ENCODE measurements at regions of chr2 and their contacts with region 1.

Region 1: DNA sequence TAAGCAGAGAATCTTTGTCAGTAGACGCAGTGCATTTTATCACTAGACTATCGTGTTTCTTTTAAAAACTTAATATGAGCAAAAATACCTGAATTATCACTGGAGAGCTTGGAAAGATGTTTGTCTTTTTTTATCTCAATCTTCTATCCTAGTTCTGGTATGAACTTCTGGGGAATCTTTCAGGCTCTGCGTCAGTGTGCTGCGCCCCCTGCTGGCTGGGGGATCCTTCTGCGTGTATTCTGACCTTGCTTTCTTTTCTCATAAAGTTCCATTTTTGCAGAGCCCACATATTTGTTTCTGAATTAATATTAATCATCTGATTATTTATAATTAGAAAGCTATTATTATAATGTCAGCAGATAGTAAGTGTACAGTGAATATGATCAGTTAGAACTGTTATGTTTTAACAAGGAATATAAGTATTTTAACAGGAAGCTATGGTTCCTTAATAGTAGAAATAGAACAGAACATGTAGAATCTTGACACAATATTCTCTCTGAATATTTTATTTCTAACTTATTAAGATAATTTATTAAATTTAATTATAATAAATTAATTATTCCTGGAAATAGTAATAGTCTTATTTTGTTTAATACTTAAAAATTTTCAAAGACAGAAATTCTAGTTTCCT is 945.0 kb upstream of the CRIM1 start:
- DNase-seq: peak; percentile 62
- H3K4me3 Mint-ChIP-seq: no peak overlapping the region
- H3K27ac Mint-ChIP-seq: no peak overlapping the region
- H3K4me1 Mint-ChIP-seq: no peaks in the 10 kb centered on the region
- H3K27me3 Mint-ChIP-seq: peaks cover 51% of the 10 kb centered on the region
- CTCF ChIP-seq: peak; percentile 86

Region 2: GRCh38 chr2:34012715-34013302 is 1397.7 kb before region 1 on chr2:
- CTCF ChIA-PET with region 1: interaction called, 4 read pairs
- POLR2A ChIA-PET with region 1: no interaction called
- intact Hi-C with region 1: loop called (anchors 1 kb)
- DNase-seq: peak; percentile 66
- H3K4me3 Mint-ChIP-seq: no peak overlapping the region
- H3K27ac Mint-ChIP-seq: peak overlapping the region; percentile 3
- H3K4me1 Mint-ChIP-seq: peaks cover 6% of the 10 kb centered on the region
- H3K27me3 Mint-ChIP-seq: no peaks in the 10 kb centered on the region
- CTCF ChIP-seq: peak; percentile 80

Region 3: DNA sequence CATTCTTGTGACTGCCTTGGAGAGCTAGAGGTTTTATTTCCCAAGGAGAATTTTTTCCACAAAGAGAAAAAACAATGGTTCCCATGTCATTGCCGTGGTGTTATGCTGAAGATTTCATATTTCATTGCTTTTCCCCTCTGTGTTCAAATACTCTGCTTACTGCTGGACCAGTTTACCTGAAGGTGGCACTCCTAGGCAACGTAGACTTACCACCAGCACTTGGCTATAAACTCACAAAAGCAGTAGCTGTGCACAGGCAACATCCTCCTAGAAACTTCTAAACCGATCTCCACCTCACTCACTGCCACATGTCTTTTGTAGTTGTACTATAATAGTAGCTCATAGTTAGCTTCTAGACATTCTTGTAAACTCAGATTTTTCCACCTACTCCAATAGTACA is 374.7 kb before region 1 on chr2:
- CTCF ChIA-PET with region 1: interaction called, 12 read pairs
- POLR2A ChIA-PET with region 1: no interaction called
- intact Hi-C with region 1: no loop called
- DNase-seq: peak; percentile 34
- H3K4me3 Mint-ChIP-seq: no peak overlapping the region
- H3K27ac Mint-ChIP-seq: no peak overlapping the region
- H3K4me1 Mint-ChIP-seq: no peaks in the 10 kb centered on the region
- H3K27me3 Mint-ChIP-seq: peaks cover 46% of the 10 kb centered on the region
- CTCF ChIP-seq: no peak

Region 4: DNA sequence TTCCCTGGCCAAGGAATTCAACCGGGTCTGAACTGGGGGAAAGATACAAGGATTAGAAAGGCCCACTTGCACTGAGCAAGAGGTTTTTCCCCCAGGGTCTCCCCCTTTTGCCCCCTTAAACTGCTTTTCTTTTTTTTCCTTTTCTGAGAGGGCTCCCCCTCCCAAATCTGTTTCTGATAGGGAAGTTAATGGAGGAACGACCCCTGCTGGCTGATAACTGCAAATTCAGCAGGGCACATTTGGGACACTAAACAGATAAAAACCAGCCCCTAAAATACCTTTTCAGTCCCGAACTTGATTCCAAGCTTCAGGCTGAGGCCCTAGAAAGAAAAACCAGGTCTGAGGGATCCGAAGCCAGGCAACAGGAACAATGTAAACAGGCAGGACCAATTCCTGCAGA is 67.4 kb before region 1 on chr2:
- CTCF ChIA-PET with region 1: no interaction called
- POLR2A ChIA-PET with region 1: no interaction called
- intact Hi-C with region 1: no loop called
- DNase-seq: peak; percentile 38
- H3K4me3 Mint-ChIP-seq: no peak overlapping the region
- H3K27ac Mint-ChIP-seq: no peak overlapping the region
- H3K4me1 Mint-ChIP-seq: no peaks in the 10 kb centered on the region
- H3K27me3 Mint-ChIP-seq: peaks cover 76% of the 10 kb centered on the region
- CTCF ChIP-seq: peak; percentile 53

Region 5: GRCh38 chr2:35374845-35375244 is 35.7 kb before region 1 on chr2:
- CTCF ChIA-PET with region 1: interaction called, 13 read pairs
- POLR2A ChIA-PET with region 1: no interaction called
- intact Hi-C with region 1: no loop called
- DNase-seq: no peak
- H3K4me3 Mint-ChIP-seq: no peak overlapping the region
- H3K27ac Mint-ChIP-seq: no peak overlapping the region
- H3K4me1 Mint-ChIP-seq: no peaks in the 10 kb centered on the region
- H3K27me3 Mint-ChIP-seq: peaks cover 49% of the 10 kb centered on the region
- CTCF ChIP-seq: no peak

Region 6: DNA sequence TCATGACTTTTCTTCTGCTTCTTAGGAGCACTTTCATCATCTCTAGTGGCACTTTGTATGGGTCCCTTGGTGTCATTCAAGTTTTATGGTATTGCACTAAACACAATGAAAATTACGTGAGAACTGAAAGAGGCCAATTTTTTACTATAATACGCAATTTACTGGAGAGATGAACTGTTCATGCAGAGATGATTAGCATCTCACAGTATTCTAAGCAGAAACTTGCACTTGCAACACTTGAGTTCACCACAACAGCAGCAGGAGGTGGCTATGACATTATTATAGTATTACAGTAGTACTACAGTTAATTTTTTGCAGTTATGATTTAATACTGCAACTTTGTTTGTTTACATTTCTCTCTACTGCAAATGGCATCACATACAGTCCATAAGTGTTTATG is 151.9 kb after region 1 on chr2:
- CTCF ChIA-PET with region 1: no interaction called
- POLR2A ChIA-PET with region 1: no interaction called
- intact Hi-C with region 1: no loop called
- DNase-seq: no peak
- H3K4me3 Mint-ChIP-seq: no peak overlapping the region
- H3K27ac Mint-ChIP-seq: no peak overlapping the region
- H3K4me1 Mint-ChIP-seq: no peaks in the 10 kb centered on the region
- H3K27me3 Mint-ChIP-seq: no peaks in the 10 kb centered on the region
- CTCF ChIP-seq: no peak

Region 7: GRCh38 chr2:35714883-35715282 is 304.3 kb after region 1 on chr2:
- CTCF ChIA-PET with region 1: no interaction called
- POLR2A ChIA-PET with region 1: no interaction called
- intact Hi-C with region 1: no loop called
- DNase-seq: no peak
- H3K4me3 Mint-ChIP-seq: no peak overlapping the region
- H3K27ac Mint-ChIP-seq: no peak overlapping the region
- H3K4me1 Mint-ChIP-seq: no peaks in the 10 kb centered on the region
- H3K27me3 Mint-ChIP-seq: peaks cover 83% of the 10 kb centered on the region
- CTCF ChIP-seq: no peak

Measured in MCF 10A (cell line).